Aorta (tissue), 5 donors: ENCODE measurements at regions of chr14 and their contacts with region 1.

Region 1: DNA sequence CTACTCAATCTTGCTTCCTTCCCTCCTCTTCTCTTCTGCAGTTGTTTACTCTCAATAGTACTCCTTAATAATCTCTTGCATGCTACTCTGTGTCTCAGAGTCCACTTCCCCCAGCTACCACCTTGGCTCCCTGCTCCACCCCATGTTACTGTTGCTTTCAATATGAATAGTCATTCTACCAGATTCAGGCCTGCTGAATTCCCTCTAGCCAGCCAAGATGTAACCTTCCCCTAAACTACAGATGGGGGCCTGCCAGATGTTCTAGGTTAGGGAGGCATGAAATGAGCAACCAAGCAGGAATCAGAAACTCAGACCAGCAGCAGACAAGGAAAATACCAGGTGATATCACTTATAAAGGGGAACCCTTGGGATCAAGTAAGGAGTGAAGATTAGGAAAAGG is 392.1 kb upstream of the DDHD1 start:
- DNase-seq: no peak
- ATAC-seq: no peak
- H3K4me3 ChIP-seq: no peak overlapping the region
- H3K27ac ChIP-seq: no peak overlapping the region
- H3K4me1 ChIP-seq: no peaks in the 10 kb centered on the region
- H3K27me3 ChIP-seq: no peaks in the 10 kb centered on the region

Region 2: DNA sequence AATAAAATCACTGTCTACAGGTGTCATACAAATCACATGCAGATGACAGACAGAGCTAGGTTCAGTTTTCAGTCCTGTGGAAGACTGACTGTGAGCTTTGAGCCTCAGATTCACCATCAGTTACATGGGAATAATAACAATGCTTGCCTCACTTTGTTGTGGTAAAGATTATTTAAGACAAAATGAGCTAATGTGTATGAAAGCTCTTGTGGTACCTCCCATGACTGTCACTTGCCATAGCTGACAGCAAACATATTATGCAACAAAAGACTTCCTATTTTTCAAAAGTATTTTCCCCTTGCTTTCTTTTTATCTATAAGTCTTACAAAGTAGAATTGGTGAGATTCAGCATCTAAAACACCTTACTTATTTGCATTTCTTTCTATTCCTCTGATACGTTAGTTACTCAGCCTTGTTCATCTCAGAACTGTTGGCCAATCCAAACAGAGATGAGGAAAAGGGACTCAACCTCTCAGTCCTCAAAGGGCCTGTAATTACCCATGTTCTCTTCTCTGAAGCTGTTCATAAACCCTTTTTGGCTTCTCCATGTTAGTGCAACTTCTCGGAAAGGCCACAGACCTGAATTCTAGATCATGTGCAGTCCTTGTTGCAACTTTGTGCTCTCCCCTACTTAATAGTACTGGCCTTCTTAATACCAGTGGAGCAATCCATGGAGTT is 383.3 kb before region 1 on chr14:
- intact Hi-C with region 1: no loop called
- DNase-seq: no peak
- ATAC-seq: no peak
- H3K4me3 ChIP-seq: no peak overlapping the region
- H3K27ac ChIP-seq: no peak overlapping the region
- H3K4me1 ChIP-seq: no peaks in the 10 kb centered on the region
- H3K27me3 ChIP-seq: no peaks in the 10 kb centered on the region

Region 3: GRCh38 chr14:53338192-53338591 is 207.0 kb before region 1 on chr14:
- intact Hi-C with region 1: no loop called
- DNase-seq: no peak
- ATAC-seq: no peak
- H3K4me3 ChIP-seq: no peak overlapping the region
- H3K27ac ChIP-seq: no peak overlapping the region
- H3K4me1 ChIP-seq: no peaks in the 10 kb centered on the region
- H3K27me3 ChIP-seq: no peaks in the 10 kb centered on the region

Region 4: GRCh38 chr14:53368711-53369191 is 176.5 kb before region 1 on chr14:
- intact Hi-C with region 1: no loop called
- DNase-seq: no peak
- ATAC-seq: no peak
- H3K4me3 ChIP-seq: no peak overlapping the region
- H3K27ac ChIP-seq: no peak overlapping the region
- H3K4me1 ChIP-seq: peaks cover 2 to 6% of the 10 kb centered on the region in 2 donors
- H3K27me3 ChIP-seq: no peaks in the 10 kb centered on the region

Region 5: GRCh38 chr14:54322676-54323337 is 777.6 kb after region 1 on chr14:
- intact Hi-C with region 1: loop called in 1 of 2 experiments (anchors 5 kb)
- DNase-seq: no peak
- ATAC-seq: no peak
- H3K4me3 ChIP-seq: no peak overlapping the region
- H3K27ac ChIP-seq: no peak overlapping the region
- H3K4me1 ChIP-seq: no peaks in the 10 kb centered on the region
- H3K27me3 ChIP-seq: no peaks in the 10 kb centered on the region